Head of caudate nucleus (tissue), 42 donors: ENCODE measurements at regions of chr3 and their contacts with region 1.

Region 1: DNA sequence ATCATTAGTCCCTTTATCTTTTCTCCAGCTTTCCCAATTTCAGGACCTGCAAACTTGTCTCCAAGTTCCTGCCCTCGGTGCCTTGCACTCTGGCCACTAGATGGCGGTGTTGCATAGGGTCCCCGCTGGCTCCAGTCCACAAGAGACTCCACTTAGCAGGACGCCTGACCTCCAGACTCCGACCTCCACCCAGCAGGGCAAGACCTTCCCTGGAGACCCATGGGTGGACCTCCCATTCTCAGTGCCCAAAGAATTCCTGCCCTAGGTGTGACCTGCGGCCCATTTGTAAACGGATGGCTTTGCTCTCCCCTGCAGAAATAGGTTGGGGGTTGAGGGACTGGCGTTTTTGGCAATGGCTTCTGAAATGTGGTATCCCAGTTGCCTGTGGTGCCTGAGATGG is 82.6 kb downstream of the LSM3 start:
- DNase-seq: peak; percentile 68 to 97 (median 91)

Region 2: GRCh38 chr3:14042680-14043079 is 218.5 kb before region 1 on chr3:
- intact Hi-C with region 1: no loop called
- DNase-seq: no peak

Region 3: DNA sequence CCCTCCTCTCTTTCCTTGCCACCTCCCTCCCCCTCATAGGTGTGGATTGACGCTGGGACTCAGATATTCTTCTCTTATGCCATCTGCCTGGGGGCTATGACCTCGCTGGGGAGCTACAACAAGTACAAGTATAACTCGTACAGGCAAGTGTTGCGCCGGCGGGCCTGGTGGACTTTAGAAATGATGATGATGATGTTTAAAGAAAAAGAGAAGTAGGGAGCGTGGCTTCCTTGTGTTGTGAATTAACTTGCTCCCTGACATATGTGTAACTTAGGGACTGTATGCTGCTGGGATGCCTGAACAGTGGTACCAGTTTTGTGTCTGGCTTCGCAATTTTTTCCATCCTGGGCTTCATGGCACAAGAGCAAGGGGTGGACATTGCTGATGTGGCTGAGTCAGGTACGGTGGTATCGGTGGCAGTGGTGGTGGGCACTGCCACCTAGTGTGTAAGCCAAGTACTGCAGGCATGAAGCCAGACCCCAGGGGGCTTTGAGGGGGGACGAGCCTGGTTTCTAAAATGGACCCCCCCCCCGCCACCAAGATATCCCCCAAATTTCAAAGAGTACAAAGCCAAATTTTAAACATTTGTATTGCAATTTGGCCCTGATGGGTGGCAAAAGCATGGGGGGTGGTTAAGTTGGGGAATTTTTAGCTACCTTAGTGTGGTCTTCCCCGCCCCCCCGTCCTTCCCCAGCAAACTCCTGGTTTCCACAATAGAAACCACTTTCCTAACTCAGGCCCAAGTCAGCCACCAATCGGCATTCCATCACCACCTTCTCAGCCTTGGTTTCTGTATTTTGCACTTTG is 206.8 kb after region 1 on chr3:
- intact Hi-C with region 1: loop called (anchors 5 kb)
- DNase-seq: peak in 33 of 42 donors; percentile 31 to 82 (median 54)